ENCODE measurements at regions of chr9 and their contacts with region 1.

Region 1: GRCh38 chr9:131349881-131350563 is 43.9 kb upstream of the PRRC2B start:
- DNase-seq: peak; percentile 79 to 82 (median 81)
- H3K4me3 ChIP-seq: no peak overlapping the region
- H3K4me3 Mint-ChIP-seq: peak overlapping the region in 4 of 8 donors; percentile 36 to 63 (median 50)
- H3K27ac ChIP-seq: no peak overlapping the region
- H3K27ac Mint-ChIP-seq: peak overlapping the region in 3 of 7 donors; percentile 30 to 91 (median 42)
- H3K4me1 ChIP-seq: peaks cover 9% of the 10 kb centered on the region
- H3K4me1 Mint-ChIP-seq: peaks cover 0 to 12% (median 6%) of the 10 kb centered on the region in 4 donors
- H3K27me3 ChIP-seq: no peaks in the 10 kb centered on the region
- H3K27me3 Mint-ChIP-seq: peaks cover 0 to 4% of the 10 kb centered on the region in 2 donors

Region 2: DNA sequence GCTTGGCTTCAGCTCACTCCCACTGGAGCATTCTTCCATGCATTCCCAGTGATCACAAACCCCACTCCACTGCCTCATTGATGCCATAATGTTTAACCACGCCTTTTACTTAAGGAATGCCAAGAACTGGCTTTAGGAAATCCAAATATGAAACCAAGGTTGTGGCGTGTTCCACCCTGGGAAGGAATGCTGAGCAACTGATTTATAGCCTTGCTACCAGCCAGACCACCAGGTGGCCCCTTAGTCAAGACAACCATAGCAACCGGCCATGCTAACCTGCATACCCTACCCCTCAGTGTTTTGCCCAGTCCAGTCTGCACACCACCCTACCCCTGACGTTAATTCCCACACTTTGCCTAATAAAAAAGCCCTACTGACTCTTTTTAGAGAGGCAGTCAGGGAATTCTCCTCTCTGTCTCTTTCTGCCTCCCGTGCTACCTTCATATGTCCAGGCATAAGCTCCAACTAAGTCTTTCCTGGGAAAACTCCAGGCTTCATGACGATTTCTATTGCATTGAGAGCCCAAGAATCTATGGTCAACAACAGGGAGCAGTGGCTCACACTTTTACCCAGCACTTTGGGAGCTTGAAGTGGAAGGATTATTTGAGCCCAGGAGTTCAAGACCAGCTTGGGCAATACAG is 16.9 kb after region 1 on chr9:
- CTCF ChIA-PET with region 1: interaction called, 19 read pairs
- POLR2A ChIA-PET with region 1: no interaction called
- intact Hi-C with region 1: no loop called
- DNase-seq: no peak
- H3K4me3 ChIP-seq: no peak overlapping the region
- H3K4me3 Mint-ChIP-seq: no peak overlapping the region
- H3K27ac ChIP-seq: no peak overlapping the region
- H3K27ac Mint-ChIP-seq: no peak overlapping the region
- H3K4me1 ChIP-seq: peaks cover 1% of the 10 kb centered on the region
- H3K4me1 Mint-ChIP-seq: peaks cover 2 to 5% (median 3%) of the 10 kb centered on the region in 4 donors
- H3K27me3 ChIP-seq: no peaks in the 10 kb centered on the region
- H3K27me3 Mint-ChIP-seq: no peaks in the 10 kb centered on the region

Region 3: DNA sequence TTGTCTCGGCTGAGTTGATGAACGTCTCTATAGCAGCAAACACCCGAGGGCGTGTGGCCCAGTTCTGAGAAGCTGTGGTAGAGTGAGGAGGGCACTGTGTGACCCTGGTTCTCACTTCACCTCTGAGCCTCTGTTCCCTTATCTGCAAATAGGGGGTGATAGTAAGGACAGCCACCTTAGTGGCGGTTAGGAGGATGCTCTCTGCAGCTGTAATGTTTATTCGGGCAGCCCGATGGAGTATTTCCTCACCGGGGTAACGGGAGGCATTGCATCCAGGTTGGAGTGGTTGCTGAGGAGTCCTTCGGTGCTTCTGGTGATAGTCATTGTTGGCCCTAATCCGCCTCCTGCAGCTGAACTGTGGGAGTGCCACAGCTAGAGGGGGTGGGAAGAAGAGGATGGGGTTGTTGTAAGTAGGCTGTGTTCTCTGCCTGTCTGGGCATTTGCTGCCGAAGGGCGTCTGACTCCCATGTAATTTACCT is 57.7 kb after region 1 on chr9:
- CTCF ChIA-PET with region 1: interaction called, 21 read pairs
- POLR2A ChIA-PET with region 1: interaction called, 4 read pairs
- intact Hi-C with region 1: loop called (anchors 2 kb)
- DNase-seq: peak; percentile 54 to 68 (median 59)
- H3K4me3 ChIP-seq: peak overlapping the region in 1 of 2 donors; percentile 6
- H3K4me3 Mint-ChIP-seq: peak overlapping the region; percentile 72 to 89 (median 82)
- H3K27ac ChIP-seq: peak overlapping the region; percentile 46
- H3K27ac Mint-ChIP-seq: peak overlapping the region; percentile 62 to 92 (median 88)
- H3K4me1 ChIP-seq: peaks cover 95% of the 10 kb centered on the region
- H3K4me1 Mint-ChIP-seq: peaks cover 70 to 92% (median 80%) of the 10 kb centered on the region in 4 donors
- H3K27me3 ChIP-seq: no peaks in the 10 kb centered on the region
- H3K27me3 Mint-ChIP-seq: no peaks in the 10 kb centered on the region

Region 4: GRCh38 chr9:131559421-131560000 is 209.5 kb after region 1 on chr9:
- CTCF ChIA-PET with region 1: interaction called, 31 read pairs
- POLR2A ChIA-PET with region 1: no interaction called
- intact Hi-C with region 1: loop called (anchors 1 kb)
- DNase-seq: no peak
- H3K4me3 ChIP-seq: no peak overlapping the region
- H3K4me3 Mint-ChIP-seq: no peak overlapping the region
- H3K27ac ChIP-seq: no peak overlapping the region
- H3K27ac Mint-ChIP-seq: no peak overlapping the region
- H3K4me1 ChIP-seq: no peaks in the 10 kb centered on the region
- H3K4me1 Mint-ChIP-seq: peaks cover 2 to 10% (median 5%) of the 10 kb centered on the region in 4 donors
- H3K27me3 ChIP-seq: peaks cover 4% of the 10 kb centered on the region
- H3K27me3 Mint-ChIP-seq: peaks cover 5 to 9% of the 10 kb centered on the region in 2 donors

Measured in CD4-positive, alpha-beta memory T cell (primary cell).